ENCODE measurements at regions of chr3 and their contacts with region 1.

Region 1: GRCh38 chr3:155079746-155080487 is at the start of gene MME:
- DNase-seq: peak; percentile 32 to 40
- H3K4me3 ChIP-seq: peak within 1 kb of the TSS; percentile 30
- H3K4me3 Mint-ChIP-seq: peak within 1 kb of the TSS; percentile 67
- H3K27ac Mint-ChIP-seq: no peak within 1 kb of the TSS
- H3K4me1 ChIP-seq: peaks cover 6% of the 10 kb centered on the region; the same call in 1 of the 2 replicates
- H3K4me1 Mint-ChIP-seq: peaks cover 15% of the 10 kb centered on the region
- H3K27me3 ChIP-seq: peaks cover 1% of the 10 kb centered on the region; the same call in 1 of the 2 replicates
- H3K27me3 Mint-ChIP-seq: peaks cover 19% of the 10 kb centered on the region
- CTCF ChIP-seq: no peak
- total RNA-seq, gene MME: 0.52 and 1.8 TPM in 2 replicates

Region 2: GRCh38 chr3:154943981-154944380 is 135.9 kb before region 1 on chr3:
- CTCF ChIA-PET with region 1: no interaction called
- POLR2A ChIA-PET with region 1: no interaction called
- intact Hi-C with region 1: no loop called
- DNase-seq: no peak
- H3K4me3 ChIP-seq: no peak overlapping the region
- H3K4me3 Mint-ChIP-seq: no peak overlapping the region
- H3K27ac Mint-ChIP-seq: no peak overlapping the region
- H3K4me1 ChIP-seq: no peaks in the 10 kb centered on the region
- H3K4me1 Mint-ChIP-seq: no peaks in the 10 kb centered on the region
- H3K27me3 ChIP-seq: no peaks in the 10 kb centered on the region
- H3K27me3 Mint-ChIP-seq: no peaks in the 10 kb centered on the region
- CTCF ChIP-seq: no peak

Region 3: GRCh38 chr3:155015776-155016436 is 64.0 kb before region 1 on chr3:
- CTCF ChIA-PET with region 1: no interaction called
- POLR2A ChIA-PET with region 1: no interaction called
- intact Hi-C with region 1: no loop called
- DNase-seq: no peak
- H3K4me3 ChIP-seq: no peak overlapping the region
- H3K4me3 Mint-ChIP-seq: no peak overlapping the region
- H3K27ac Mint-ChIP-seq: no peak overlapping the region
- H3K4me1 ChIP-seq: no peaks in the 10 kb centered on the region; the same call in 1 of the 2 replicates
- H3K4me1 Mint-ChIP-seq: peaks cover 7% of the 10 kb centered on the region
- H3K27me3 ChIP-seq: no peaks in the 10 kb centered on the region
- H3K27me3 Mint-ChIP-seq: no peaks in the 10 kb centered on the region
- CTCF ChIP-seq: no peak

Region 4: GRCh38 chr3:155065537-155065936 is 14.4 kb before region 1 on chr3:
- CTCF ChIA-PET with region 1: no interaction called
- POLR2A ChIA-PET with region 1: no interaction called
- intact Hi-C with region 1: no loop called
- DNase-seq: no peak
- H3K4me3 ChIP-seq: no peak overlapping the region
- H3K4me3 Mint-ChIP-seq: no peak overlapping the region
- H3K27ac Mint-ChIP-seq: no peak overlapping the region
- H3K4me1 ChIP-seq: no peaks in the 10 kb centered on the region
- H3K4me1 Mint-ChIP-seq: no peaks in the 10 kb centered on the region
- H3K27me3 ChIP-seq: no peaks in the 10 kb centered on the region
- H3K27me3 Mint-ChIP-seq: peaks cover 3% of the 10 kb centered on the region
- CTCF ChIP-seq: no peak

Region 5: GRCh38 chr3:155138677-155139076 is 58.8 kb after region 1 on chr3:
- CTCF ChIA-PET with region 1: no interaction called
- POLR2A ChIA-PET with region 1: no interaction called
- intact Hi-C with region 1: loop called (anchors 5 kb)
- DNase-seq: no peak
- H3K4me3 ChIP-seq: no peak overlapping the region
- H3K4me3 Mint-ChIP-seq: no peak overlapping the region
- H3K27ac Mint-ChIP-seq: no peak overlapping the region
- H3K4me1 ChIP-seq: no peaks in the 10 kb centered on the region
- H3K4me1 Mint-ChIP-seq: no peaks in the 10 kb centered on the region
- H3K27me3 ChIP-seq: no peaks in the 10 kb centered on the region
- H3K27me3 Mint-ChIP-seq: no peaks in the 10 kb centered on the region
- CTCF ChIP-seq: no peak

Measured in Caco-2 (cell line).